Adrenal gland (tissue), 19 donors: ENCODE measurements at regions of chr19 and their contacts with region 1.

Region 1: GRCh38 chr19:37906869-37907734 is at the start of gene SIPA1L3:
- DNase-seq: peak; percentile 93 to 97 (median 96)
- H3K4me3 ChIP-seq: peak within 1 kb of the TSS; percentile 5 to 89 (median 69)
- H3K27ac ChIP-seq: peak within 1 kb of the TSS in 3 of 5 donors; percentile 22 to 74 (median 66)
- H3K4me1 ChIP-seq: peaks cover 6 to 8% of the 10 kb centered on the region in 2 donors
- H3K27me3 ChIP-seq: no peaks in the 10 kb centered on the region
- CTCF ChIP-seq: no peak
- POLR2A ChIP-seq: peak; percentile 20 to 74
- total RNA-seq, gene SIPA1L3: 3.8 to 24.1 (median 13.3) TPM

Region 2: GRCh38 chr19:37855098-37855497 is 52.0 kb before region 1 on chr19:
- intact Hi-C with region 1: no loop called
- DNase-seq: peak in 3 of 7 donors; percentile 4 to 18 (median 13)
- H3K4me3 ChIP-seq: no peak overlapping the region
- H3K27ac ChIP-seq: no peak overlapping the region
- H3K4me1 ChIP-seq: no peaks in the 10 kb centered on the region
- H3K27me3 ChIP-seq: no peaks in the 10 kb centered on the region
- CTCF ChIP-seq: no peak
- POLR2A ChIP-seq: no peak

Region 3: GRCh38 chr19:38095411-38096308 is 188.6 kb after region 1 on chr19:
- intact Hi-C with region 1: loop called in 1 of 2 experiments (anchors 10 kb)
- DNase-seq: peak; percentile 65 to 92 (median 77)
- H3K4me3 ChIP-seq: no peak overlapping the region
- H3K27ac ChIP-seq: no peak overlapping the region
- H3K4me1 ChIP-seq: no peaks in the 10 kb centered on the region
- H3K27me3 ChIP-seq: no peaks in the 10 kb centered on the region
- CTCF ChIP-seq: peak; percentile 45 to 73 (median 66)
- POLR2A ChIP-seq: no peak

Region 4: GRCh38 chr19:38224014-38224862 is 317.1 kb after region 1 on chr19 and contains the start of gene DPF1:
- intact Hi-C with region 1: loop called in 1 of 2 experiments (anchors 10 kb)
- DNase-seq: peak in 2 of 7 donors; percentile 35 to 44
- H3K4me3 ChIP-seq: peak within 1 kb of the TSS in 1 of 4 donors; percentile 44
- H3K27ac ChIP-seq: no peak within 1 kb of the TSS
- H3K4me1 ChIP-seq: peaks cover 14 to 15% of the 10 kb centered on the region in 2 donors
- H3K27me3 ChIP-seq: peaks cover 57% of the 10 kb centered on the region
- CTCF ChIP-seq: no peak
- POLR2A ChIP-seq: no peak
- total RNA-seq, gene DPF1: 0.37 to 1.3 (median 0.75) TPM in 4 of 9 donors, not detected in the others

Region 5: GRCh38 chr19:38239816-38240215 is 332.7 kb after region 1 on chr19:
- intact Hi-C with region 1: loop called in 1 of 2 experiments (anchors 5 kb)
- DNase-seq: no peak
- H3K4me3 ChIP-seq: no peak overlapping the region
- H3K27ac ChIP-seq: no peak overlapping the region
- H3K4me1 ChIP-seq: peaks cover 0 to 10% of the 10 kb centered on the region in 2 donors
- H3K27me3 ChIP-seq: no peaks in the 10 kb centered on the region
- CTCF ChIP-seq: no peak
- POLR2A ChIP-seq: no peak

Region 6: DNA sequence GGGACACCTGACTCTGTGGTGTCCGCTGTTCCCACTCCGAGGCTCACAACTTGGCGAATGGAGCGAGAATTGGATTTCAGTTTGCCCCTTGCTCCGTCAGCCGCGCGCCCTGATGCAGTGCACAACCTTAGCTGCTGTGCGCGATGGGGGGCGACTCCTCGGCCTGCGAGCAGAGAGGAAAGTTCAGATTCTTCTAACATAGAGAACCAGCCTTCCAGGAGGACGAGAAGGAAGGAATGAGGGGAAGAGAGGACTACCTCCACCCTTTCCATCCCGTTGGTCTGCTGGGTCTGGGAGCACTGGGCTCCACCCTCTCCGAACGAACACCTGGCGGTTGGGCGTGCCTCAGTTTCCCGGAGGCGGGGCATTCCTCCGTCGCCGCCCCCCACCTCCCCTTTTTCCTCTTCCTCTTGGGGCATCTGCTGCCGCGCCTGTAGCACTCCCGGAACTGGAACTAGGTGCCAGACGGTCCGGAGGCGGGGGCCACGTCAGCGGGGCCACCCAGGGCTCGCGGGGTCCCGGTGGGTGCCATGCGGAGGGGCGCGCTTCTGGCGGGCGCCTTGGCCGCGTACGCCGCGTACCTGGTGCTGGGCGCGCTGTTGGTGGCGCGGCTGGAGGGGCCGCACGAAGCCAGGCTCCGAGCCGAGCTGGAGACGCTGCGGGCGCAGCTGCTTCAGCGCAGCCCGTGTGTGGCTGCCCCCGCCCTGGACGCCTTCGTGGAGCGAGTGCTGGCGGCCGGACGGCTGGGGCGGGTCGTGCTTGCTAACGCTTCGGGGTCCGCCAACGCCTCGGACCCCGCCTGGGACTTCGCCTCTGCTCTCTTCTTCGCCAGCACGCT is 412.5 kb after region 1 on chr19 and contains the start of gene KCNK6:
- intact Hi-C with region 1: loop called in 1 of 2 experiments (anchors 10 kb)
- DNase-seq: peak in 3 of 7 donors; percentile 31 to 51 (median 37)
- H3K4me3 ChIP-seq: peak within 1 kb of the TSS in 3 of 4 donors; percentile 25 to 66 (median 62)
- H3K27ac ChIP-seq: peak within 1 kb of the TSS in 4 of 5 donors; percentile 48 to 84 (median 64)
- H3K4me1 ChIP-seq: peaks cover 34 to 41% of the 10 kb centered on the region in 2 donors
- H3K27me3 ChIP-seq: no peaks in the 10 kb centered on the region
- CTCF ChIP-seq: no peak
- POLR2A ChIP-seq: peak in 1 of 2 donors; percentile 9
- total RNA-seq, gene KCNK6: 1.2 to 5.4 (median 4.1) TPM